AG04450 (cell line): ENCODE measurements at regions of chr1 and their contacts with region 1.

Region 1: GRCh38 chr1:8015036-8015808 is 10.9 kb downstream of the ERRFI1 start:
- DNase-seq: no peak
- H3K4me3 ChIP-seq: no peak overlapping the region
- H3K27ac ChIP-seq: peak overlapping the region; percentile 42
- H3K27me3 ChIP-seq: no peaks in the 10 kb centered on the region
- CTCF ChIP-seq: peak; percentile 75

Region 2: GRCh38 chr1:7983086-7983778 is 32.0 kb before region 1 on chr1:
- CTCF ChIA-PET with region 1: interaction called, 31 read pairs
- POLR2A ChIA-PET with region 1: no interaction called
- DNase-seq: no peak
- H3K4me3 ChIP-seq: no peak overlapping the region
- H3K27ac ChIP-seq: no peak overlapping the region
- H3K27me3 ChIP-seq: no peaks in the 10 kb centered on the region
- CTCF ChIP-seq: no peak

Region 3: GRCh38 chr1:8025341-8026144 is 10.3 kb after region 1 on chr1:
- CTCF ChIA-PET with region 1: interaction called, 12 read pairs
- POLR2A ChIA-PET with region 1: interaction called, 6 read pairs
- DNase-seq: no peak
- H3K4me3 ChIP-seq: peak overlapping the region; percentile 80
- H3K27ac ChIP-seq: peak overlapping the region; percentile 11
- H3K27me3 ChIP-seq: no peaks in the 10 kb centered on the region
- CTCF ChIP-seq: no peak

Region 4: DNA sequence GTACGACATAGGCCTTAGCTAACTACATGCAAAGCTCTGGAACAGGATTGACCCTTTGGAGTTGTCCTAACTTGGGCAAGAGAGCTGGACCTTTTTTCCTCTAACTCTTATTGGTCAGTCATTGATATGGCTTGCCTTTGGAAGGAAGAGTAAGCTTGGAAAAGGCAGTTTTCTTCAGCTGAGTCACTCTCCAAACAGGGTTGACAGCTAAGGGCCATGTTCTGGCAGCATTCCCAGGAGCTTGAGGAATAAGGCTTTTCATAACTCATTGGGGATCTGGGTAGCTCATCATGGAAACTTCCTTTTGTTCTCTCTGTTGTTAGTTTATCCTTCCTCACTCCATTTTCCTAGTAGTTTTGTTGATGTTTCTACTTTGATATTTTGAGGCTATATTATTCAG is 25.4 kb after region 1 on chr1:
- CTCF ChIA-PET with region 1: no interaction called
- POLR2A ChIA-PET with region 1: no interaction called
- DNase-seq: peak; percentile 95
- H3K4me3 ChIP-seq: no peak overlapping the region
- H3K27ac ChIP-seq: no peak overlapping the region
- H3K27me3 ChIP-seq: no peaks in the 10 kb centered on the region
- CTCF ChIP-seq: no peak

Region 5: GRCh38 chr1:8302081-8302956 is 287.1 kb after region 1 on chr1:
- CTCF ChIA-PET with region 1: interaction called, 15 read pairs
- POLR2A ChIA-PET with region 1: interaction called, 3 read pairs
- DNase-seq: no peak
- H3K4me3 ChIP-seq: no peak overlapping the region
- H3K27ac ChIP-seq: no peak overlapping the region
- H3K27me3 ChIP-seq: no peaks in the 10 kb centered on the region
- CTCF ChIP-seq: no peak

Region 6: DNA sequence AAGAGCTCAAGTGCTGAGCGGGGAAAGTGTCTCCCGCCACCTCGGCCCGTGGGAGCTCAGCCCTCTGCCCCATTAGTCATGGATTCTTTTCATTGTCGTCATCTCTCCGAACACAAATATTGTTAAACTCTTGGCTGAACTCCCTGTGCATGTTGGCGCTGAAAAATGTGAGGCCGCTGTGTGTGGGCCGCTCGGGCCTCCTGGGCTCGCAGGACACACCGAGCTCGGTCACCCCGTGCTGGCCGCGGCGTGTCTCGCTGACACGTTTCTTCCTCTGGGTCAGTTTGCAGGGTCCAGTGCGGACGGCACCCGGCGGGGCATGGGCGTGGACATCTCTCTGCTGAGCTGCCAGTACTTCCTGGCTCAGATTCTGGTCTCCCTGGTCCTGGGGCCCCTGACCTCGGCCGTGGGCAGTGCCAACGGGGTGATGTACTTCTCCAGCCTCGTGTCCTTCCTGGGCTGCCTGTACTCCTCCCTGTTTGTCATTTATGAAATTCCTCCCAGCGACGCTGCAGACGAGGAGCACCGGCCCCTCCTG is 328.3 kb after region 1 on chr1:
- CTCF ChIA-PET with region 1: interaction called, 68 read pairs
- POLR2A ChIA-PET with region 1: interaction called, 3 read pairs
- DNase-seq: peak; percentile 89
- H3K4me3 ChIP-seq: peak overlapping the region; percentile 45
- H3K27ac ChIP-seq: peak overlapping the region; percentile 91
- H3K27me3 ChIP-seq: no peaks in the 10 kb centered on the region
- CTCF ChIP-seq: no peak